MCF 10A (cell line): ENCODE measurements at regions of chr7 and their contacts with region 1.

Region 1: GRCh38 chr7:88169717-88170320 is 50.0 kb downstream of the SRI start:
- DNase-seq: peak; percentile 22
- H3K4me3 Mint-ChIP-seq: no peak overlapping the region
- H3K27ac Mint-ChIP-seq: no peak overlapping the region
- H3K4me1 Mint-ChIP-seq: no peaks in the 10 kb centered on the region
- H3K27me3 Mint-ChIP-seq: peaks cover 48% of the 10 kb centered on the region
- CTCF ChIP-seq: peak; percentile 21

Region 2: DNA sequence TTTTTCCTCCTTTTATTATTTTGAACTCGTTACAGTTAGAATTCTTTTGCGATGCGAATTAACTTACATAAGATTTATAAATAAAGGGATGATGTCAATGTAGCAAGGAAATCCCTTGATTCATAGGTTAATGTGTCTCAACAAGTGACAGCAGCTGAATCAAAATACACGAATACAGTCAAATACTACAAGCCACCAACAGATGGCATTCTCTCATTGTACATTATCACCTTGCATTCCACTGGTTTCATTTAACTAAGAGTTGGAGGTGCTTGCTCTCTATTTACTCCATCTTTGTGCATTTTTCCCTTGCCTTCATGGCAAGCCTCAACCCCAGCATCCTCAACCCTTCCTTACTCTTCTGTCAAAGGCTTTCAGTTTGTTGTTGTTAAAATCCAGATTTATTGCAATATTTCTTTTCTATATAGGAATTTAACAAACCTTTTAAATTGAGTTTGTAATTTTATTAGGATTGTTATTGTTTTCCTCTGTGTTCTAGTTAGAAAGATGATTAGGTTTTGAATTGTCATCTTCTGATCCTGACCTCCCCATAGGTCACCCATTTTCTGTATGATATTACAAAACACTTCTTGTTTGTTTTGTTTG is 371.9 kb before region 1 on chr7:
- CTCF ChIA-PET with region 1: interaction called, 4 read pairs
- POLR2A ChIA-PET with region 1: no interaction called
- intact Hi-C with region 1: loop called (anchors 1 kb)
- DNase-seq: peak; percentile 71
- H3K4me3 Mint-ChIP-seq: no peak overlapping the region
- H3K27ac Mint-ChIP-seq: no peak overlapping the region
- H3K4me1 Mint-ChIP-seq: no peaks in the 10 kb centered on the region
- H3K27me3 Mint-ChIP-seq: peaks cover 2% of the 10 kb centered on the region
- CTCF ChIP-seq: peak; percentile 54

Region 3: DNA sequence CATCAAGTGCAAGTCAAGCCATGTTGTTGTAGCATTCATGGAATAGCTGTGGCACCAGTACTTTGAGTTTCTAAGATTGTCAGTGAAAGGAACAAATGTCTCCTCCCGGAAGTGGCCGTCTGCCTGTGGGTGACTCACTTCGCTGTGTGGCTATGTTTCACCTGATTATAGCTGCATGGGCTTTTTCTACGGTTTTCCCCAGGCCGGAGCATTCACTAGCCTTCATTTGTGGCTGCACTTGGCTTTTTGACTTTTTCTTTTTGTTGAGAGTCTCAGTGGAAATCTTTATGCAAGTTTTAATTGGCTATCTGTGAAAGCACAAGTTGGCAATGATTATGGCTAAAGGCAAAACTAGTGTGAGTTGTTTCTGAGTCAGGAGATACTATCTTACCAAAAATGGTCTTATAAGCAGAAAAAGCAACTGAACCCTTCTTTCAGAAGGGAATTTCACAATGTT is 15.1 kb after region 1 on chr7:
- CTCF ChIA-PET with region 1: interaction called, 20 read pairs
- POLR2A ChIA-PET with region 1: interaction called, 5 read pairs
- intact Hi-C with region 1: no loop called
- DNase-seq: peak; percentile 48
- H3K4me3 Mint-ChIP-seq: no peak overlapping the region
- H3K27ac Mint-ChIP-seq: peak overlapping the region; percentile 13
- H3K4me1 Mint-ChIP-seq: peaks cover 9% of the 10 kb centered on the region
- H3K27me3 Mint-ChIP-seq: peaks cover 27% of the 10 kb centered on the region
- CTCF ChIP-seq: no peak

Region 4: DNA sequence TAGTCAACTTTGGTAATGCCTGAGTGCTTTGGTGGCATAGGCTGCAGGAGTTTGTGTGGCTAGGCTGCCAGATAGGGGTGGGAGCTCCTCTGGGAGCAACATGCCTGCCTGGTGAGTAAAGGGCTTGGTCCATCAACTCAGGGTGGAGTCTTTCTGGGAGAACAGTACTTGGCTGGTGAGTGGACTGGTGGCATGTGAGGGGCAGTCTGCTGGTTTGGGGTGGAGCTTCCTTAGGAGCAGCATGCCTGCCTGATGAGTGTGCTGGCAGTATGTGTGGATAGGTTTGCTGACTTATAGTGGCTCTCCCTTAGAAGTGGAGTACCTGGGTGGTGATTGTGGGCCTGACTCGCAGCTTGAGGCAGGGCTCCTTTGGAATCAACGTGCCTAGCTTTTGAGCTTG is 84.9 kb after region 1 on chr7:
- CTCF ChIA-PET with region 1: no interaction called
- POLR2A ChIA-PET with region 1: no interaction called
- intact Hi-C with region 1: no loop called
- DNase-seq: peak; percentile 84
- H3K4me3 Mint-ChIP-seq: no peak overlapping the region
- H3K27ac Mint-ChIP-seq: peak overlapping the region; percentile 50
- H3K4me1 Mint-ChIP-seq: peaks cover 44% of the 10 kb centered on the region
- H3K27me3 Mint-ChIP-seq: no peaks in the 10 kb centered on the region
- CTCF ChIP-seq: no peak